Mucosa of descending colon (tissue), 3 donors: ENCODE measurements at regions of chr5 and their contacts with region 1.

Region 1: DNA sequence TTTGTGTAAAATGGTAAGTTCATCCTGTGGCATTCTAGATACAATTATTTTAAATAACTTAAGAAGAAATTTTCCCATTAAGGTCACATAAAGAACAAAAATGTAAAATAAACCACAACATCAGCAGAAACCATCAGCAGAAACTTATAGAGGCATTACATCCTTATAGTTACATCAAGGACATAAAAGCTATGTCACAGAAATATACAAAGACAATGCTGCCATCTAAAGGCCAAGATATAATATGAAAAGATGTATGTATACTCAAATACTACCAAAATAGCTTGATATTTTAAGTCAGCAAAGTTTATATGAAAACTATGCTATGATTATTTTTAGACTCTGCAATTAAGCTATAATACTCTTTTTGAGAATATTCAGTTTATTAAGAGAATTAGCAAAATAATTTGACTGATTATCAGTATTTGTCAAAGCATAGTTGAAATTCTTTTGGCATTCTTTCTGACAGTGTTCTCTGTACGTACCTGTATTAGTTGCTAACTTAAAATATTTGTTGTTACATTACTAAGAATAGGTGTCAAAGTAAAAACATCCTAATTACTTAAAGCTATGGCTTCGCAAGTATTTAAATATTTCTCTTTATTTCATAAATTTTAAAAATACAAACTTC is 36.2 kb downstream of the FBXL17 start:
- DNase-seq: no peak
- ATAC-seq: peak; percentile 84
- H3K4me3 ChIP-seq: no peak overlapping the region
- H3K4me1 ChIP-seq: peaks cover 12% of the 10 kb centered on the region
- CTCF ChIP-seq: no peak

Region 2: DNA sequence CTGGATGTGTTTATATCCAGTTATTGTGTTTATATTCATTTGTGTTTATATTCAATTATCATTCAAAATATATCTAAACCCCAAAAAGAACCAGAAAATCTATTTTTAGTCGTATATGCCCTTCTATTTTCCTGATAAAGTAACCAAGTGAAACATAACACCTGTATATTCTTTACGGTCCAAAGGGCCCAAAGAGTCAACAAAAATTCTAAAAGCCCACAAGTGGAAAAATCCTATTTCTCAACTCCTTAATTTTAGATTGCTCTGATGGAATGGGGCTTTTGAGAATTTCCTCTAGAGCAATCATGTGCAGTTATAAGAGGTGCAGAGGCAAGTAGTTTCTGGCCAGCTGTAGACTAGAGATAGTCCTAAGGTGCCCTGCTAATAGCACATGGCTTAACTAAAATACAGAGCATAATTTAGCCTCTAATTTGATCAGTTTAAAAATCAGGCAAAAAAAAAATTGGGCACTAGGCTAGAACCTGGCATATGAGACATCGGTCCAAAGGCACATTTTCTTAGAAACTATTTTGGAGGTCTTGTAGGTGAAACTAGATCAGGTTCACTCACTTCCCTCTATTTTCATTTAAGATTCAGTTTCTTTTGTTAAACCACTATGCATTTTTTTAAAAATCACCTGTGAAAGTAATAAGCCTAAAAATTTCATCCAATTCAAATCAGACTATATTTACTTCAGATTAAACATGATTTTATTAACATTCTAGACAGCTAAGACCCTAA is 219.7 kb before region 1 on chr5:
- intact Hi-C with region 1: no loop called
- DNase-seq: no peak
- ATAC-seq: no peak
- H3K4me3 ChIP-seq: no peak overlapping the region
- H3K4me1 ChIP-seq: no peaks in the 10 kb centered on the region
- CTCF ChIP-seq: no peak

Region 3: GRCh38 chr5:108260117-108260857 is 85.4 kb before region 1 on chr5:
- intact Hi-C with region 1: loop called (anchors 2 to 10 kb)
- DNase-seq: peak in 2 of 3 donors; percentile 71 to 91
- ATAC-seq: peak; percentile 100
- H3K4me3 ChIP-seq: no peak overlapping the region
- H3K4me1 ChIP-seq: peaks cover 12% of the 10 kb centered on the region
- CTCF ChIP-seq: peak; percentile 92